Activated CD8-positive, alpha-beta memory T cell treated with anti-CD3 and anti-CD28 coated beads, Interleukin-2, amount 10 ng/mL, durations not matched to agents 7 days and 5 days (primary cell): ENCODE measurements at regions of chr2 and their contacts with region 1.

Region 1: DNA sequence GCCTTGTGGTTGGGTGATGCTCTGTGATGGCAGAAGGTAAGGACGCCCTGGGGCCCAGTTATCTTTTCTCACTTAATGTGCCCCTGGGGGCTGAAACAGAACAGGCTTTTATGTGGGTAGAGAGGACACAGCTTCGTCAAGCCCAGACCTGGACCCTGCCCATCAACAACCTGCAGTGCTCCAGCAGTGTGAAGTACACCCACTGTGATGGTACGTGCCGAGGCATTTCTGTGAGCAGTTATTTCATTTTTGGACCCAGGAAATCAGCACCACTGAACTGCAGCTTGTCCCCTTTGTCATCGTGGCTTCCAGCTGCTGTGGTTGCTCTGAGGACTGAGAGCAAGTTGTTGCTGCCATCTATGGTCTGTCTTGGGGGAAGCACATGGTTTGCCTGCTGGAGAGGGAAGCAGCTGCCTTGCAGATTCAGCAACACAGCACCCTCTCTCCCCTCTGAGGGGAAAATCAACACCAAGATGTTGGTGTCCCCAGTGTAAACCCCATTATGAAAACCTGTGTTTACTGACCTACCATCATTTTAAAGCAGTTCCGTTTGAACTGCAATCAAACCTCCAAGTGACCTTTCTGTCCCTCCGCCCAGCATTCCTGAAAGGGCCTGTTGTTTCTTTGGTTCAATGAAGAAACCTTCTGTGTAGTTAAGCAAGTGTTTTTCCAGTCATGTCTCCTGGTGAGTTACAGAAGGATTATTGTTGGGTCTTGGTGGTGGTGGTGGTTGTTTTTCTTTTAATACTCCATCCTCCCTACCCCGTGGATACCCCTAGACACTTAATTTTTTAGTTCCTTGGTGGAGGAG is 158.2 kb downstream of the MGAT5 start:
- DNase-seq: peak; percentile 89
- ATAC-seq: peak; percentile 99
- H3K4me3 Mint-ChIP-seq: no peak overlapping the region
- H3K27ac Mint-ChIP-seq: peak overlapping the region; percentile 13
- H3K4me1 Mint-ChIP-seq: peaks cover 42% of the 10 kb centered on the region
- H3K27me3 Mint-ChIP-seq: no peaks in the 10 kb centered on the region

Region 2: DNA sequence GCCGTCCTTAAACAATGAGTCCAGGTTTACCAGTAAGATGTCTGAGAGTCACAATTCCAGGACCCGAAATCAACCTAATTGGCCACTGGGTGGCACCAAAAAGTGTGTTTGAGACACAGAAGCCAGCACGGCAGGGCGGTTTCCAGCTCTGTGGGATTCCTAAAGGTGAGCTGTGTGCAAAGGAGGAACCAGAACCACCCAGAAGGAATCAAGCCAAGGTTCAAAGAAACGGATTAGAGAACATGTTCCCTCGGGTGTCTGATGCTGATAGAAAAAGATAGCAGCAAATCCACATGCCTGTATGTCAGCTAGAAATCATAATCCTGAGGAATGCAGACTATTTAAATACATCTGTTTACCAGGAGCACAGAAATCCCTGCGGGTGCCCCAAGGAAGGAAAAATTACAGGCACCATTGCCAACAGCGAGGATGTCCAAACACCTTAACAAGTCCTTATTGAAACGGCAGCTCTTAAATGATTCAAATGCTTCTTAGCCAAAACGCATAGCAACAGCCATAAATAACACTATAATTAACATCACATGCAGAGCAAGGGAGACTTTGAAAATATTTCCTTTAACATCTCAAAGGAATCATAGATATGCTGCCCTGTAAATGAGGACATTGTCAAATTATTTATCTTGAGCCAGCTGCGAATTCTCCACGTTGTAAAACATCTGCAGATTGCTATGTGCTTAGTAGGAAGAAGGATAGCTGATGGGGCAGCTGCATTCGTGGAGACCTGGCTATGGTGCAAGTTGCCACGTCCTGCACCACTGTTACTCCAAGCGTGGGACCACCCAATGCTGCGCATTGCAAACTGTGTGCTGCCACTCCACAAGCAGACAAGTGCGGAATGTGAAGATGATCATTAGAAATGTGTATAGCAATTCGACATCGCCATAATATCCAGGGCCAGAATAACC is 525.0 kb before region 1 on chr2:
- CTCF ChIA-PET with region 1: interaction called, 28 read pairs
- DNase-seq: peak; percentile 62
- ATAC-seq: peak; percentile 55
- H3K4me3 Mint-ChIP-seq: no peak overlapping the region
- H3K27ac Mint-ChIP-seq: no peak overlapping the region
- H3K4me1 Mint-ChIP-seq: no peaks in the 10 kb centered on the region
- H3K27me3 Mint-ChIP-seq: peaks cover 18% of the 10 kb centered on the region

Region 3: GRCh38 chr2:134118279-134119116 is 293.5 kb before region 1 on chr2:
- CTCF ChIA-PET with region 1: interaction called, 109 read pairs
- DNase-seq: peak; percentile 93
- ATAC-seq: peak; percentile 47
- H3K4me3 Mint-ChIP-seq: peak overlapping the region; percentile 87
- H3K27ac Mint-ChIP-seq: peak overlapping the region; percentile 92
- H3K4me1 Mint-ChIP-seq: peaks cover 35% of the 10 kb centered on the region
- H3K27me3 Mint-ChIP-seq: peaks cover 14% of the 10 kb centered on the region

Region 4: DNA sequence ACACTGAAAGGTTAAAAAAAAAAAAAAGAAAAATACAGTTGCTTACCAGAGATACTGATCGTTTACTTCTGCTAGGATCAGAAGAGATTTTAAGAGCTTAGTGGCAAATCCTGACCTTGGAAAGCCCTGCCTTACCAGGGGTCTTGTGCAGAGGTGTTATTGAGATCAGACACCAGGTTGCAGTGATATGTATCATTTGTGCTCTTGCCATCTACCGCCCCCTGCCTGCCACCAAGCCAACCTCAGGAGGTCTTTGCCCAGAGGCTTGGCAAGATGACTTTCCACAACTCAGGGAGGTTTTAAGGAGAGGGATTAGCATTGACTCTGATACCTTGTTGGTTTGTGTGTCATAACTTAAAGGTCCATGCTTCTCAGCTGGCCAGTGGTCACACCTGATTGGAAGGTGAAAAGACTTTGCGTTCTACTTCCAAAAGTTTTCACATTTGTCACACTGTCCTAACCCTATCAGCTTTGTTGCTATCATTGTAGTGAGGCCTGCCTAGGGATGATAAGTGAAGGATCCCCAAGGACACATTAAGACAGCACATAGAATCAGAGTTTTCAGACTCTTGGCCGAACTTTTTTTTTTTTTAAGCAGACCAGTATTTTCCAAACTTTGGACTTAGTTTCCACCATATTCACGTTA is 204.3 kb before region 1 on chr2:
- CTCF ChIA-PET with region 1: interaction called, 17 read pairs
- DNase-seq: peak; percentile 69
- ATAC-seq: peak; percentile 88
- H3K4me3 Mint-ChIP-seq: no peak overlapping the region
- H3K27ac Mint-ChIP-seq: no peak overlapping the region
- H3K4me1 Mint-ChIP-seq: peaks cover 7% of the 10 kb centered on the region
- H3K27me3 Mint-ChIP-seq: no peaks in the 10 kb centered on the region

Region 5: DNA sequence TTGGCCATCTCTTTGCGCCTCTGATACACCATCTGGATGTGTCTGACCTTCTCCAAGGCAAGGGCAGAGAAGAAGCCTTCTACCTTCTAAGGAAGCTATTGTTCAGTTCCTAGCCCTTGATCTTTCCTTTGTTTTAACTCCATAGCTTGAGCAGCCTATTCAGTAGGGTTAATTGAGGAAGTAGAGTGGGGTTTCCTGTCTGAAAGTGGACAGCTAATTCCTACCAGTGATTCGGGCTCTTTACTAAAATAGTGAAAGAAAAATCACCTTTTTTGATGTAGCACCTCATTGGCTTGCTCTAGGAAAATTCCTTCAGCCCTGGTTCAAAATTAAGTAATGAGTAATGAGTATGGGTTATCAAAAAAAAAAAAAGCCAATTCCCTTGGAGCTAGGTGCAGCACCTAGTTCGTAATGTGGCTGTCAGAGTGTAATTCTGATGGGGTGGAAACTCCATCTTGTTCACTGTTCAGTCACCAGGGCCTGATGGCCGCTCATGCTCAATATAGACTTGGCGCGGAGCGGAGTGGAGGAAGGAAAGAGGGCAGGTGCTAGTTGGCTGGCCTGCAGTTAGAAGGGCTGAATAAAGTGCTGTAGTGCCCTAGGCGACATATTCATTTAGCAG is 161.1 kb before region 1 on chr2:
- CTCF ChIA-PET with region 1: interaction called, 50 read pairs
- DNase-seq: no peak
- ATAC-seq: no peak
- H3K4me3 Mint-ChIP-seq: no peak overlapping the region
- H3K27ac Mint-ChIP-seq: no peak overlapping the region
- H3K4me1 Mint-ChIP-seq: peaks cover 83% of the 10 kb centered on the region
- H3K27me3 Mint-ChIP-seq: peaks cover 65% of the 10 kb centered on the region

Region 6: DNA sequence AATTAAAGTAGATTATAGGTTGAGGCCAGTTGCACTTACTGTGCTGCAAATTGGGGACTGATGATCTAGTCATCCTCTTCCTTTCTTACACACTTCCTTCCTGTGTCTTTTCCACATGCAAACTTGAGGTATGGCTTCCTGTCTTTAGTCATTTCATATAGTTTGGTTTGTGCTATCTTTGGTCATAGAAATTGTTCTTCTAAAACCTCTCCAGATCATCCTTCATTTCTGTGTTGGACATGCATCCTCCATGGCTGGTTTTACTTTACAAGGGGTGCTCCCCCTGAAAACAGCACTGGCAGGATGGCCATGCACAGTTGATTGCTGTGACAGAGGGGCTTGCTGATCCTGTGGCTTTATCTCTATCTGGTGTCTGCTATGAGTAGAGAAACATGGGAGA is 121.7 kb before region 1 on chr2:
- CTCF ChIA-PET with region 1: interaction called, 21 read pairs
- DNase-seq: peak; percentile 63
- ATAC-seq: peak; percentile 85
- H3K4me3 Mint-ChIP-seq: no peak overlapping the region
- H3K27ac Mint-ChIP-seq: no peak overlapping the region
- H3K4me1 Mint-ChIP-seq: peaks cover 23% of the 10 kb centered on the region
- H3K27me3 Mint-ChIP-seq: peaks cover 17% of the 10 kb centered on the region

Region 7: GRCh38 chr2:134398300-134398699 is 13.7 kb before region 1 on chr2:
- CTCF ChIA-PET with region 1: interaction called, 10 read pairs
- DNase-seq: no peak
- ATAC-seq: no peak
- H3K4me3 Mint-ChIP-seq: no peak overlapping the region
- H3K27ac Mint-ChIP-seq: no peak overlapping the region
- H3K4me1 Mint-ChIP-seq: peaks cover 2% of the 10 kb centered on the region
- H3K27me3 Mint-ChIP-seq: no peaks in the 10 kb centered on the region

Region 8: GRCh38 chr2:134491771-134492441 is 79.9 kb after region 1 on chr2:
- CTCF ChIA-PET with region 1: no interaction called
- DNase-seq: no peak
- ATAC-seq: no peak
- H3K4me3 Mint-ChIP-seq: no peak overlapping the region
- H3K27ac Mint-ChIP-seq: no peak overlapping the region
- H3K4me1 Mint-ChIP-seq: no peaks in the 10 kb centered on the region
- H3K27me3 Mint-ChIP-seq: peaks cover 43% of the 10 kb centered on the region